ENCODE measurements at regions of chr21 and their contacts with region 1.

Region 1: GRCh38 chr21:15729674-15730483 is at the start of gene USP25:
- DNase-seq: peak; percentile 83 to 86 (median 84)
- H3K4me3 ChIP-seq: peak within 1 kb of the TSS; percentile 47 to 65
- H3K4me3 Mint-ChIP-seq: peak within 1 kb of the TSS; percentile 82 to 98 (median 94)
- H3K27ac ChIP-seq: peak within 1 kb of the TSS; percentile 65
- H3K27ac Mint-ChIP-seq: peak within 1 kb of the TSS; percentile 83 to 96 (median 95)
- H3K4me1 ChIP-seq: peaks cover 38% of the 10 kb centered on the region
- H3K4me1 Mint-ChIP-seq: peaks cover 17 to 43% (median 29%) of the 10 kb centered on the region in 4 donors
- H3K27me3 ChIP-seq: no peaks in the 10 kb centered on the region
- H3K27me3 Mint-ChIP-seq: no peaks in the 10 kb centered on the region
- total RNA-seq, gene USP25: 72.7 to 73.5 TPM

Region 2: DNA sequence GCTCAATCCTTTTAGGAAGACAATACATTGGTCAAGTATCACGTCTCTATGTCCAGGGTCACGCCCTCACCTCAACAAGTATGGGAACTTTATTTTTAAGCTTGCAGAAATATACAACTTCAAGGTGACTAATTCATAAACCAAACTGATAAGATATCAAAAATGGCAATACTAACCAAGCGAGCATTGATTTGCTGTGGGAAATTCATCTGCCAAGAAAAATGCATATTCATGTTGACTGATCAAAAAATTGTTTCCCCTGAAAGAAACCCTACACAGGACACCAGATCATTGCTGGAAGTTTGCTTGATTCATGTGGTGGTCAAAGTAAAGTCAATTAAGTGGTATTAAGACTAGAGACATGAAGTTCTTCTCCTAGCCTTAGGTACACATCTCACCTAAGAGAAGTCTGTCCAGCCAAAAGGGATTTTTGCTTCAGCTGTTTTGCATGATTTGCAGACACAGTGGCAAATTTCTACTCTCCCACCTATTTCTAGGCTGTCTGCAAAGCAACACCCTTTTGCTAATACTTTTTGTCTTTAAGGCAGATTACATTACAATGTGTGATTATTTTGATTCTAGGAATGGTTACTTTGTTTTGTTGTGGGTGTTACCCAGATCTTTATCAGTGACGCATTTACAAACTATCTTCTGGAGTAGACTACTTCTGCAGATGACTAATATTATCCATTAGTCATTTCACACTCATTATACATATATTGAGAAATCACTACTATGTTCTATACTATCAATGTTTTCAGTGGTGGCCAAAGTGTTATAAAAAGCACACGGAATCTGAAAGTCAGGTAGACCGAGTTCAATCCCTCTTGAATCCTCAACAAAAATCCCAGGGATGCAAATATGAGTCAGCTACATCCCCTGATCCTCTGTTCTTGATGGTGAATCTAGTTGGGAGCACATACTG is 1196.1 kb before region 1 on chr21:
- CTCF ChIA-PET with region 1: no interaction called
- POLR2A ChIA-PET with region 1: no interaction called
- intact Hi-C with region 1: loop called (anchors 5 kb)
- DNase-seq: peak; percentile 78 to 87 (median 83)
- H3K4me3 ChIP-seq: peak overlapping the region; percentile 33 to 48
- H3K4me3 Mint-ChIP-seq: peak overlapping the region; percentile 84 to 96 (median 90)
- H3K27ac ChIP-seq: peak overlapping the region; percentile 87
- H3K27ac Mint-ChIP-seq: peak overlapping the region; percentile 97 to 100 (median 98)
- H3K4me1 ChIP-seq: peaks cover 60% of the 10 kb centered on the region
- H3K4me1 Mint-ChIP-seq: peaks cover 50 to 77% (median 59%) of the 10 kb centered on the region in 4 donors
- H3K27me3 ChIP-seq: no peaks in the 10 kb centered on the region
- H3K27me3 Mint-ChIP-seq: peaks cover 0 to 1% of the 10 kb centered on the region in 2 donors

Region 3: GRCh38 chr21:15514073-15514946 is 215.6 kb before region 1 on chr21:
- CTCF ChIA-PET with region 1: no interaction called
- POLR2A ChIA-PET with region 1: interaction called, 3 read pairs
- intact Hi-C with region 1: loop called (anchors 5 kb)
- DNase-seq: peak; percentile 74 to 84 (median 77)
- H3K4me3 ChIP-seq: peak overlapping the region in 1 of 2 donors; percentile 39
- H3K4me3 Mint-ChIP-seq: peak overlapping the region; percentile 31 to 86 (median 66)
- H3K27ac ChIP-seq: peak overlapping the region; percentile 30
- H3K27ac Mint-ChIP-seq: peak overlapping the region; percentile 19 to 94 (median 87)
- H3K4me1 ChIP-seq: peaks cover 33% of the 10 kb centered on the region
- H3K4me1 Mint-ChIP-seq: peaks cover 17 to 26% (median 23%) of the 10 kb centered on the region in 4 donors
- H3K27me3 ChIP-seq: no peaks in the 10 kb centered on the region
- H3K27me3 Mint-ChIP-seq: no peaks in the 10 kb centered on the region

Region 4: GRCh38 chr21:15713412-15713811 is 16.5 kb before region 1 on chr21:
- CTCF ChIA-PET with region 1: no interaction called
- POLR2A ChIA-PET with region 1: no interaction called
- intact Hi-C with region 1: no loop called
- DNase-seq: no peak
- H3K4me3 ChIP-seq: no peak overlapping the region
- H3K4me3 Mint-ChIP-seq: no peak overlapping the region
- H3K27ac ChIP-seq: no peak overlapping the region
- H3K27ac Mint-ChIP-seq: no peak overlapping the region
- H3K4me1 ChIP-seq: no peaks in the 10 kb centered on the region
- H3K4me1 Mint-ChIP-seq: peaks cover 0 to 2% (median 0%) of the 10 kb centered on the region in 4 donors
- H3K27me3 ChIP-seq: no peaks in the 10 kb centered on the region
- H3K27me3 Mint-ChIP-seq: peaks cover 6 to 7% of the 10 kb centered on the region in 2 donors

Region 5: DNA sequence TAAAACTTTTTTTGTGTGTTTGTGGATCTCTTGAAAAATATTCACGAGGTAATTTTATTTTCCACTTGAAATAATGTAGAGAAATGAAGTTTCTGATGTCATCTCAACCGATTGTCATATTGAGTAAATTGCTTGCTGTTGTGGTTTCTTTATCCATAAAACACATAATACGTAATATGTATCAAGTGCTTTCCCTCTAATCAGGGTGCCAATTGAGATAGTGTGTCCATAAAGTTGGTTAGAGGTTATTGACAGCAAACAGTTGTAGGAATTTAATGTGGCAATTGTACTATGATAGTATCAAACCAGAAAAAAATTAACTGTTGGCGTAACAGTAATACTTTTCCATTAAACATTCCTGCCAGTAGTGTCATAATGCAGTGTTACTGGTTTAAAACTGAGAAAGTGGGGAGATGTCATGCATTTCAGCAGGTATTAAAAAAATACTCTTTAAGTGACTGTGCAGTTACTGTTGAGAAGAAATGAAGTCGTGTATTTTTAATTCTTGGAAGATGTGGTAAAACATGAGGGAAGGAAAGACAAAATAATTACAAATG is 38.2 kb after region 1 on chr21:
- CTCF ChIA-PET with region 1: no interaction called
- POLR2A ChIA-PET with region 1: interaction called, 3 read pairs
- intact Hi-C with region 1: loop called (anchors 2 kb)
- DNase-seq: no peak
- H3K4me3 ChIP-seq: no peak overlapping the region
- H3K4me3 Mint-ChIP-seq: no peak overlapping the region
- H3K27ac ChIP-seq: no peak overlapping the region
- H3K27ac Mint-ChIP-seq: peak overlapping the region in 1 of 7 donors; percentile 75
- H3K4me1 ChIP-seq: peaks cover 6% of the 10 kb centered on the region
- H3K4me1 Mint-ChIP-seq: peaks cover 43 to 74% (median 50%) of the 10 kb centered on the region in 4 donors
- H3K27me3 ChIP-seq: no peaks in the 10 kb centered on the region
- H3K27me3 Mint-ChIP-seq: no peaks in the 10 kb centered on the region

Region 6: DNA sequence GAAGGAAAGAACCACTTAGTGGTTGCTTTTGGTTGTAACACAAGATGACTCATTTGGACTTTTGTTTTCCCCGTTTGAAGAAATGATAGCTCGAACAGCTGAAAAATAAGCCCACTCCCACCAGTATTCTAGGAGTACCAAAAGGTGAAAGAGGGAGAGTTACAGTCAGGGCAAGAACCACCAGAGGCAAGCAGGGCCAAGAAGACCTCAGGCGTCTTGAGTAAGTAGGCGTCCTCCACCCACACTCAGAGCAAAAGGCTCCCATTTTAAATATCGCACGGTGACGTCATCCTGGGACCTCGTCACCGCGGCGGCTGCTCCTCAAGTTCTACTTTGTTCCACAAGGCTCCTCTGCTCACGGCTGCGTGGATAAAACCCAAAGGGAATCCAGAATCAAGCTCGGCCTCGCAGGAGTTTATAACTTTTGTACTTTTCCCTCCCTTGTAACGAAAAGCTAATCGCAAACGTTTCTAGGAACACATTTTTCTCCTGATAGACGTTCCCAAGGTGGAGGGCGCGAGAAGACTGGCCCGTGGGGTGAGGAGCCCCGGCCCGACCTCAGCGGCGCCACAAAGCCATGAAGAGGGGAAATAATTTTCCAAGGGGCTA is 1881.6 kb after region 1 on chr21:
- CTCF ChIA-PET with region 1: no interaction called
- POLR2A ChIA-PET with region 1: no interaction called
- intact Hi-C with region 1: loop called (anchors 5 kb)
- DNase-seq: peak; percentile 80 to 91 (median 84)
- H3K4me3 ChIP-seq: peak overlapping the region; percentile 87 to 97
- H3K4me3 Mint-ChIP-seq: peak overlapping the region; percentile 91 to 99 (median 95)
- H3K27ac ChIP-seq: peak overlapping the region; percentile 84
- H3K27ac Mint-ChIP-seq: peak overlapping the region; percentile 95 to 100 (median 99)
- H3K4me1 ChIP-seq: peaks cover 27% of the 10 kb centered on the region
- H3K4me1 Mint-ChIP-seq: peaks cover 17 to 50% (median 25%) of the 10 kb centered on the region in 4 donors
- H3K27me3 ChIP-seq: no peaks in the 10 kb centered on the region
- H3K27me3 Mint-ChIP-seq: no peaks in the 10 kb centered on the region

Measured in CD4-positive, alpha-beta memory T cell (primary cell).